HepG2 (cell line): ENCODE measurements at regions of chr18 and their contacts with region 1.

Region 1: DNA sequence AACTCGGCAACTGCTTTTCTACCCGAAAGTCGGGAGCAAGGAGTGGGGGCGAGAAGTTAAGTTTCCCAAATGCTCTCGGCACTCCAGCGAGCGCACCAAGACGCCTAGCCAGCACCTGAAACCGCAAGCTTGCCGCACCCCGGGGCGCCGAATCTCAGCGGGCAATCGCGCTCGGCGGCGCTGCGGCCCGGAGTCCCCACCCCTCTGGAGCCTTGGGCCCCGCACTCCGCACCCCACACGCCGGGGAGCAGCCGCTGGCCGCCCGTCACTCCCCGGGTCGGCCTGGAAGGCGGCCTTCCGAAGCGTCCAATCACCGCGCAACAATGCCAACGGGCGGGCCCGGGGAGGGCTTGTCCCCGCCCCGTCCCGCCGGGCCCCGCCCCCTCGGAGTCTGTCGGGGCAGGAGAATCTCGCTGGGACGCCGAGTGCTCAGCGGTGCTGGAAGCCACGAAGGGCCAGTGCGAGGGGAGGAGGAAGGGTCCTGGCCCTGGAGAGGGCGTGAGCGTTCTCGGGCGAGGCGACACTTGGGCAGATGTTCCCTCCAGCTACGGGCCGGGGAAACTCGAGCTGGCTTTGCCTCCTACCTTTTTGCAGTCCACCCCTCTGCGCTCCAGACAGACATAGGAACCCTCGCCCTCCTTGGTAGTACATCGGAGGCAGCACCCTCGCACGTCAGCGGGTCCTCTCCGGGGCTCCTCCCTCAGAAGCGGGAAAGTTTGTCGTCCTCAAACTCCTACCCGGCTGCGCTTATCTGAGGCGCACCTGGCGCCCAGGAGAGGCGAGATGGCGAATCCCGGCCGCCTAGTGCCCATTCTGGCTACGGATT is 1.1 kb upstream of the ZBTB7C start:
- DNase-seq: peak; percentile 65
- ATAC-seq: peak; percentile 98
- H3K4me3 ChIP-seq: peak overlapping the region; percentile 54 to 74 (median 66)
- H3K27ac ChIP-seq: no peak overlapping the region
- H3K4me1 ChIP-seq: peaks cover 6% of the 10 kb centered on the region; the same call in 1 of the 2 replicates
- H3K27me3 ChIP-seq: peaks cover 16 to 54% of the 10 kb centered on the region in 2 experiments
- CTCF ChIP-seq: no peak
- EP300 ChIP-seq: no peak
- POLR2A ChIP-seq: no peak
- RAD21 ChIP-seq: no peak

Region 2: DNA sequence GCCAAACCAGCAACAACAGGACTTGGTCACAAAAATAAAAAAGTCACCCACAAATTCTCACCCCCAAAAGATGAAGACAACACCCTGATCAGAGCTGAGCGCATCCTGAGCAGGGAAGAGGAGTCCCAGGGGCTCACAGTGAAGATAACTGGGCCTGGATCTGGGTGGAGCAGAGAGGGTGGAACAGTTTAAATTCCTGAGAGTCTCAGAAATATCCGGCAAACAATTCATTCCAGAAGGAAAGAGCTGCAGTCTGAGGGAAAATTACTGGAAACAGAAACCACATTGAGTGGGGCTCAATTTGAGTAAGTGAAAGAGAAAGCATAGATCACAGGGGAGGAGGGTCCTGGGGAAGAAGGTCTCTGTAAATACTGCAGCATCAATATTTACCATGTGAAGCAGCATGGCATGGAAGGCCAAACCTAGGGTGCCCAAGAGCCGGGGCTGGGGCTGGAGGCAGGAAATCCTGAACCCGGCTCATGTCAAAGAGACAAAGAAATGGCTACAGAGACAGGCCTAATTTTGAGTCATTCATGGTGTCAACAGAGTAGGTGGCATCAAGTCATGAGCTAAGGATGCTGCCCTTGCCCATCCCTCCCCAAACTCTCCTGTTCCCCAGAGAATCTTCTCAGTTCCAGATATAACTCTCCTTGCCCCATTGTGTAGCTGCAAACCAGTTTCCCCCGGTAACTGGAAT is 60.3 kb after region 1 on chr18:
- CTCF ChIA-PET with region 1: no interaction called
- POLR2A ChIA-PET with region 1: no interaction called
- in situ Hi-C with region 1: no loop called
- intact Hi-C with region 1: loop called (anchors 2 kb)
- DNase-seq: peak; percentile 43
- ATAC-seq: no peak
- H3K4me3 ChIP-seq: no peak overlapping the region
- H3K27ac ChIP-seq: no peak overlapping the region
- H3K4me1 ChIP-seq: peaks cover 23% of the 10 kb centered on the region
- H3K27me3 ChIP-seq: peaks cover 2 to 11% of the 10 kb centered on the region in 2 experiments; a peak in 2 of 5 replicates
- CTCF ChIP-seq: no peak
- EP300 ChIP-seq: no peak
- POLR2A ChIP-seq: no peak
- RAD21 ChIP-seq: no peak